ENCODE measurements at regions of chr14 and their contacts with region 1.

Region 1: DNA sequence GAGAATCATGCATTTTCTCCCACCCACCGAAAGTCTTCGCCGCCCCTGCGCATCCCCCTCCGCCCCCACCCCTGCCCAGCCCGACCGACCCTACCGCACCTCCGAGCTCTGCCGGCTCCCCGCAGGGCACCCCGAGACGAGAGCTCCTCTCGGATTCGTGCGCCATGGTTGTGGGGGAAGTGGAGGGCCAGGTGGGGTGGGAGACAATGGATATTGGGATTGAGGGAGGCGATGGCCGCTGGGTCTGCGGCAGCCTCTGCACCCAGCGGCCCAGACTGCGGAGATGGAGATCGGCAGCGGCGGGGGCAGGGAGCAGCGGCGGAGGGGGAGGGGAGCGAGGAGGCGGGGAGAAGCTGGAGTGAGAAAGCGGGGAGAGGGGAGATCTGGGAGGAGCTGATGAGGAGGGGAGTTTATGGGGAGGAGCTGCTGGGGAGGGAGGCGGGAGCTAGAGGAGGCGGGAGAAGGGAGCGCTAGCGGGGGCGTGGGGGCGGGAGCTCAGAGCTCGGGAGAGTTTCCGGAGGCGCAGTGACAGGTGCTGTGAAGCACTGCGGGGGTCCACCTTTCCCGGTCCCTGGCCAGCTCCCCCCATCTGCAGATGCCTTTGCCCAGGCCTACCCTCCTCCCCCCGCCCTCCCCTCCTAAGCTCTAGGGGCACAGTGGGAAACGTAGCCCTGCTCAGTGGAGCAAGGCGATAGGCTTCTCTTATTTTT is at the start of gene SALL2:
- DNase-seq: peak; percentile 66
- H3K4me3 ChIP-seq: peak within 1 kb of the TSS; percentile 83
- H3K27ac ChIP-seq: peak within 1 kb of the TSS; percentile 81
- H3K4me1 ChIP-seq: peaks cover 45% of the 10 kb centered on the region
- CTCF ChIP-seq: no peak
- total RNA-seq, gene SALL2: 7.9 and 8.2 TPM in 2 replicates

Region 2: DNA sequence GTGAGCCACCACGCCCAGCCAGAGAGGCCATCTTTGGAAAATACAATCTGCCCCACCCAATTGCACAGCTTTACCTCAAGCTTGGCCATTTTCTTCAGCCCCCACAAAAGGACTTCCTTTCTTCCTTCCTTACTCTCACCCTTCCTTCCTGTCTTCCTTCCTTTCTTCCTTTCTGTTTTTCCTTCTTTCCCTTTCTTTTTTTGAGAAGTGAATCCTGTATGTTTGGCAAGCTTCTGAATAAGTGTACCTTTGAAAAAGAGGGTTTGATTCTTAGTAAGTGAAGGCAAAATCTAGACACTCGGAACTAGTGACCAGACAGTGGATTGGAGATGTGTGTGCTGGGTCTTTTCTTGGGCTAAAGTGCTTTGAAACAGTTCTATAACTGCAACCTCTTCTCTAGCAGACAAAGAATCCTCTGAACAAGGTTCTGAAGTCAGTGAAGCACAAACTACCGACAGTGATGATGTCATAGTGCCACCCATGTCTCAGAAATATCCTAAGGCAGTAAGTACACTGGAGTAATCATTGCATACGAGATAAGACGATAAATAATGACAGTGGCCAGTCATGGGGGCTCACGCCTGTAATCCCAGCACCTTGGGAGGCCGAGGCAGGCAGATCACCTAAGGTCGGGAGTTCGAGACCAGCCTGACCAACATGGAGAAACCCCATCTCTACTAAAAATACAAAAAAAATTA is 191.8 kb before region 1 on chr14:
- CTCF ChIA-PET with region 1: no interaction called
- POLR2A ChIA-PET with region 1: interaction called, 10 read pairs
- intact Hi-C with region 1: no loop called
- DNase-seq: no peak
- H3K4me3 ChIP-seq: no peak overlapping the region
- H3K27ac ChIP-seq: no peak overlapping the region
- H3K4me1 ChIP-seq: no peaks in the 10 kb centered on the region
- CTCF ChIP-seq: no peak

Region 3: GRCh38 chr14:21510735-21511657 is 15.1 kb before region 1 on chr14 and contains the start of gene METTL3:
- CTCF ChIA-PET with region 1: interaction called, 12 read pairs
- POLR2A ChIA-PET with region 1: interaction called, 33 read pairs
- intact Hi-C with region 1: loop called (anchors 1 kb)
- DNase-seq: peak; percentile 98
- H3K4me3 ChIP-seq: peak within 1 kb of the TSS; percentile 78
- H3K27ac ChIP-seq: peak within 1 kb of the TSS; percentile 34
- H3K4me1 ChIP-seq: peaks cover 13% of the 10 kb centered on the region
- CTCF ChIP-seq: no peak
- total RNA-seq, gene METTL3: 118 and 145 TPM in 2 replicates

Region 4: DNA sequence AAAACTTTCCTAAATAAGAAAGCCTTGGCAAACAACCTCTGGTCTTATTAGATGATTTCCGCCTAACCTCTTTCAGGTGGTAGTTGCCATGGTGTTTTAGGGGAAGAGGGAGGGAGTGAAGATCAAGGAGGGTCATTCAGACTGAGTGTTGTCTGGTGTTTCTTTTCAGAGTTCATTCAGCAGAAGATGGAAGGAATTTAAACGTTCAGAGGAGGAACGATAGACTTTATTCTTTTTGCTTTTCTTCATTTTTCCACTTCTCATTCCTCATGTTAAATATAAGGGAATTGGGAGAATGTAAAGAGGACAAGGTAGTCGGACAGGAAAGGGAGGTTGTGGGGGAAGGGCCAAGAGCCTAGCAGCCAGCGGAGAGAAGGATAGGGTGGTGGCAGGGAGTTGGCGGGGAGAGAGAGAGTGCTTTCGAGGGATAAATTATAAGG is 17.4 kb after region 1 on chr14:
- CTCF ChIA-PET with region 1: interaction called, 15 read pairs
- POLR2A ChIA-PET with region 1: interaction called, 13 read pairs
- intact Hi-C with region 1: no loop called
- DNase-seq: peak; percentile 52
- H3K4me3 ChIP-seq: no peak overlapping the region
- H3K27ac ChIP-seq: peak overlapping the region; percentile 20
- H3K4me1 ChIP-seq: peaks cover 17% of the 10 kb centered on the region
- CTCF ChIP-seq: no peak

Region 5: GRCh38 chr14:21557084-21557901 is 31.2 kb after region 1 on chr14:
- CTCF ChIA-PET with region 1: interaction called, 14 read pairs
- POLR2A ChIA-PET with region 1: interaction called, 11 read pairs
- intact Hi-C with region 1: no loop called
- DNase-seq: peak; percentile 90
- H3K4me3 ChIP-seq: peak overlapping the region; percentile 36
- H3K27ac ChIP-seq: no peak overlapping the region
- H3K4me1 ChIP-seq: peaks cover 6% of the 10 kb centered on the region
- CTCF ChIP-seq: peak; percentile 94

Region 6: GRCh38 chr14:21852061-21852664 is 326.0 kb after region 1 on chr14:
- CTCF ChIA-PET with region 1: interaction called, 11 read pairs
- POLR2A ChIA-PET with region 1: no interaction called
- intact Hi-C with region 1: no loop called
- DNase-seq: peak; percentile 73
- H3K4me3 ChIP-seq: no peak overlapping the region
- H3K27ac ChIP-seq: no peak overlapping the region
- H3K4me1 ChIP-seq: no peaks in the 10 kb centered on the region
- CTCF ChIP-seq: peak; percentile 89